Caco-2 (cell line): ENCODE measurements at regions of chr1 and their contacts with region 1.

Region 1: GRCh38 chr1:46303038-46303871 is at the starts of genes LRRC41 and UQCRH:
- DNase-seq: peak; percentile 93 to 94
- H3K4me3 ChIP-seq: peak within 1 kb of the TSS; percentile 52
- H3K4me3 Mint-ChIP-seq: peak within 1 kb of the TSS; percentile 98
- H3K27ac Mint-ChIP-seq: peak within 1 kb of the TSS; percentile 97
- H3K4me1 ChIP-seq: peaks cover 13% of the 10 kb centered on the region
- H3K4me1 Mint-ChIP-seq: peaks cover 14% of the 10 kb centered on the region
- H3K27me3 ChIP-seq: no peaks in the 10 kb centered on the region
- H3K27me3 Mint-ChIP-seq: no peaks in the 10 kb centered on the region
- CTCF ChIP-seq: no peak
- total RNA-seq, gene LRRC41: 41.7 and 43.5 TPM in 2 replicates
- total RNA-seq, gene UQCRH: 277 and 320 TPM in 2 replicates

Region 2: DNA sequence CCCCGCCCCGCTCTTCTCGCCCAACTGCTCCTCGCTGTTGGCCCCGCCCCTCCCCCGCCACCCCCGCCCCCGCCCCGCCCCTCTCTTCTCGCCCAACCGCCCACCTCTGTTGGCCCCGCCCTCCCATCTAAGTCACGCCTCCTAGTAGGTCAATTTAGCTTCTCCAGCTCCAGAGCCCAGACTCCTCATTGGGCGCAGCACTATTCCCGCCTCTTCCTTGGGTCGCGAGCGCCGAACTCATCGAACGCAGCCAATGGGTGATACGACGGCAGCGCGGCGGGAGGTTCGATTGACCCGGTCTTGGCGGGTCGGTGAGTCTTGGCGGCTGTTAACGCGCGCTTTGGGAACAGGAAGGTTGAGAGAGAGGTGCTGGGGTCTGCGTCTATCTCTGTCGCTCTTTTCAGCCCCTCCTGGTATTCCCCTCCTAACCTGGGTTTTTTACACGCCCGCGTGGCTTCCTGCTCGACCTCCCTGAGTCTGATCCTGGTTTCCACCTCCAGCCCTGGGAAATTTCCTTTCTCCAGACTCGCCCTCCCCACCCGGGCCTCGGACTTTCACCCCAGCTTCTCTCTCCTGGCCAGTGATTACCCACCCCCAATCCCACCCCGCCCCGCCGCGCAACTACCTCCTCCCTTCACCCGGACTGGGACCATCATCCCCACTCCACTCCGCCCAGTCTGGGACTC is 55.7 kb before region 1 on chr1 and contains the start of gene RAD54L:
- CTCF ChIA-PET with region 1: interaction called, 3 read pairs
- POLR2A ChIA-PET with region 1: interaction called, 10 read pairs
- intact Hi-C with region 1: no loop called
- DNase-seq: peak; percentile 96 to 99
- H3K4me3 ChIP-seq: peak within 1 kb of the TSS; percentile 64
- H3K4me3 Mint-ChIP-seq: peak within 1 kb of the TSS; percentile 96
- H3K27ac Mint-ChIP-seq: peak within 1 kb of the TSS; percentile 98
- H3K4me1 ChIP-seq: no peaks in the 10 kb centered on the region
- H3K4me1 Mint-ChIP-seq: peaks cover 6% of the 10 kb centered on the region
- H3K27me3 ChIP-seq: no peaks in the 10 kb centered on the region
- H3K27me3 Mint-ChIP-seq: no peaks in the 10 kb centered on the region
- CTCF ChIP-seq: no peak
- total RNA-seq, gene RAD54L: 29.1 and 30.6 TPM in 2 replicates